ENCODE measurements at regions of chr18 and their contacts with region 1.

Region 1: GRCh38 chr18:58768293-58768974 is 96.2 kb upstream of the ZNF532 start:
- DNase-seq: peak; percentile 42 to 79
- ATAC-seq: peak; percentile 72 to 84 (median 78)
- H3K4me3 ChIP-seq: no peak overlapping the region
- H3K4me3 Mint-ChIP-seq: no peak overlapping the region
- H3K27ac ChIP-seq: no peak overlapping the region
- H3K27ac Mint-ChIP-seq: no peak overlapping the region
- H3K4me1 ChIP-seq: peaks cover 12% of the 10 kb centered on the region
- H3K4me1 Mint-ChIP-seq: peaks cover 0 to 5% of the 10 kb centered on the region in 2 donors
- H3K27me3 ChIP-seq: peaks cover 2% of the 10 kb centered on the region
- H3K27me3 Mint-ChIP-seq: peaks cover 32 to 37% of the 10 kb centered on the region in 2 donors
- CTCF ChIP-seq: peak; percentile 34

Region 2: DNA sequence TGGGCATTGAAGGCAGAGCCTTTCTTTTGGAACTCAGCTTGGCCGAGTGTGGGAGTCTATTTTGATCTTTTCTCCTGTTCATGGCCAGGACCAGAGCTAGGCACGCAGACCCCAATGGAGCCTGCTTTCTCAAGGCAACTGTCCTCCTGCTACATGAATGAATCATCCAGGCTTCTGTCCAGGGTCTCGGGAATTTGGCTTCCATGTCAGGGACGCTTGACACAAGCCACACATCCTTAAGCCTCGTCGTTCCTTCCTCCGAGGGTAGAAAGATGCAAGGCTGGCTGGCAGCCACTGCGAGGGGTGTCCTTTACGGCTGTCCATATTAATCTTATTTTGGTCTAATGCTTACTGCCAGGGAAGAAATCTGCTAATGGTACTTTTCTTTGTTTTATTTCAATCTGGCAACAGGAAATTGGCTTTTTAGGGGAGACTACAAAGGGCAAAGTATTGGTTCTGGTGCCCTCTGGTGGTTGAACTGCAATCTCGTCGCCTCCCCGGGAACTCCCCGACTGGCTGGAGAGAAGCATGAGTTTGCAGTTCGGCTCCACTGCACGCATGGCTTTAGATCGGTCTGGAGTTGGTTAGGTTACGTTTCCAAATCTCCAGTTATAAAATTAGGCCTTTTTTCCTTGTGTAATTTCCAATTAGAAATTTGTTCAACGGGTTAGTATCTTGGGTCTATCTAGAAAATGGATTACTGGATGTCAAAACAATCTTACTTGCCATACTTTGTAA is 274.7 kb before region 1 on chr18:
- intact Hi-C with region 1: loop called (anchors 1 kb)
- DNase-seq: peak; percentile 42 to 83
- ATAC-seq: peak; percentile 78 to 97 (median 94)
- H3K4me3 ChIP-seq: no peak overlapping the region
- H3K4me3 Mint-ChIP-seq: no peak overlapping the region
- H3K27ac ChIP-seq: no peak overlapping the region
- H3K27ac Mint-ChIP-seq: no peak overlapping the region
- H3K4me1 ChIP-seq: no peaks in the 10 kb centered on the region
- H3K4me1 Mint-ChIP-seq: peaks cover 6 to 7% of the 10 kb centered on the region in 2 donors
- H3K27me3 ChIP-seq: no peaks in the 10 kb centered on the region
- H3K27me3 Mint-ChIP-seq: peaks cover 36 to 40% of the 10 kb centered on the region in 2 donors
- CTCF ChIP-seq: peak; percentile 66

Region 3: DNA sequence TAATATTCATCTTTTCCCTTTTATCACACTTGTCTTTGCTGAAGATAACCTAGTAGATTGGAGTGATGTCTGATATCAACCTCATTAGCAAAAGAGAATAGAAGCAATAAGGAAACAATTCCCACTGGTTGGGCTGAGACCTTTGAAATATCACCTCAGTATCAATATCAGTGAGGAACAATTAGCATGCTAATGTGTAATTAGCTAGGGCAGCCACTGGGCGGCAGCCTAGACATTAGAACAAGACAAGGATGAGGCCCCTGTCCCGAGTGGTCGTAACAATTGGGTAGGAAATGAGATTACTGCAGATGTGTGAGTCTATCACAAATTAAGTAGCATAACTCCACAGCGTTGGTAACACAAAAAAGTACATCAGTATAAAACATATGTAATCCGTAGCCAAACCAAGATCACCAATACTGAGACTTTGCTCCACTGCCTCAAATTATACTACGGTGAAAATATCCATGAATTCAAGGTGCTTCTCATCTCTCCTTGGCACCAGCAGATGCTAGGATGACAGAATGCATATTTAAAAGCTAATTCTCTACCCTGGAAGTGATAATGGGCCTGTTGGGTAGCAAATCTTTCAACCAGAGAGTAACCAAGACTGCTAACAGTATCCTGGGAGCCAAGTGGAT is 238.6 kb before region 1 on chr18:
- intact Hi-C with region 1: loop called (anchors 1 kb)
- DNase-seq: peak; percentile 47 to 79
- ATAC-seq: peak; percentile 62 to 88 (median 83)
- H3K4me3 ChIP-seq: no peak overlapping the region
- H3K4me3 Mint-ChIP-seq: no peak overlapping the region
- H3K27ac ChIP-seq: no peak overlapping the region
- H3K27ac Mint-ChIP-seq: no peak overlapping the region
- H3K4me1 ChIP-seq: peaks cover 1% of the 10 kb centered on the region
- H3K4me1 Mint-ChIP-seq: peaks cover 0 to 6% of the 10 kb centered on the region in 2 donors
- H3K27me3 ChIP-seq: peaks cover 3% of the 10 kb centered on the region
- H3K27me3 Mint-ChIP-seq: peaks cover 17 to 18% of the 10 kb centered on the region in 2 donors
- CTCF ChIP-seq: peak; percentile 86

Region 4: GRCh38 chr18:58970943-58971790 is 202.7 kb after region 1 on chr18:
- intact Hi-C with region 1: no loop called
- DNase-seq: no peak
- ATAC-seq: peak in 1 of 3 donors; percentile 40
- H3K4me3 ChIP-seq: no peak overlapping the region
- H3K4me3 Mint-ChIP-seq: no peak overlapping the region
- H3K27ac ChIP-seq: peak overlapping the region; percentile 32
- H3K27ac Mint-ChIP-seq: no peak overlapping the region
- H3K4me1 ChIP-seq: no peaks in the 10 kb centered on the region
- H3K4me1 Mint-ChIP-seq: no peaks in the 10 kb centered on the region
- H3K27me3 ChIP-seq: no peaks in the 10 kb centered on the region
- H3K27me3 Mint-ChIP-seq: peaks cover 4 to 10% of the 10 kb centered on the region in 2 donors
- CTCF ChIP-seq: no peak

Region 5: DNA sequence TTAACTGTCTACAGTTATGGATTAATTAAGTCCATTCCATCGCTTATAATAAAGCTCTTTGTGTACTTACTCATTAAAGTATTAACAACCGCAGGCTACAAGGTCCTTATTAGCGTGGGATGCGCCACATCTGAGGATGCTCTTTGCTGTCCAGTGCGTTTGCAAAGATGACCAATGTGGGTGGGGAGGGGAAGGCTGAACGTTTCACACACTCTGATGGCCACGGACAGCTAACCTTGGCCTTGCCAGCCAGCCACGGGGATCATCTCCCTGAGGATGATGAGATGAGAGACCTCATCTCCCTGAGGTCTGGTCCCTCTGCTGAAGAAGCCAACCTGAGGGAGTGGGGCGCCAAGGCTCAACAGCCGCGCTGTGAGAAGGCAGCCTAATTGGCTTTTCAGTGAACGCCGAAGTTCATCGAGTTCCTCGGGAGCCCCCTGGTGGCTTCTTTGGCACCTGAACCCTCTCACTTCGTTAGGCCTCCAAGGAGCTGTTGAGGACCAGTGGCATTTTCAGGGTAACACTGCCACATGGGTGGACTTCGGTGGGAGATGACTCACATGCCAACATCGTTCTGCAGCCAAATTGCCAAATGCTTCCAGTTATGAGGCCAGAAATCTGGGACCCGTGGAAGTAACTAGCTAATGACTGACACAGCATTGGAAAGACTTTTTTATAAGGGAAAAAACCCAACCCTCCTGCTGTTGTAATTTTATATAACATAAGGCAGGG is 301.9 kb after region 1 on chr18:
- intact Hi-C with region 1: loop called (anchors 1 kb)
- DNase-seq: peak; percentile 50 to 81
- ATAC-seq: peak; percentile 65 to 88 (median 68)
- H3K4me3 ChIP-seq: no peak overlapping the region
- H3K4me3 Mint-ChIP-seq: no peak overlapping the region
- H3K27ac ChIP-seq: no peak overlapping the region
- H3K27ac Mint-ChIP-seq: no peak overlapping the region
- H3K4me1 ChIP-seq: no peaks in the 10 kb centered on the region
- H3K4me1 Mint-ChIP-seq: no peaks in the 10 kb centered on the region
- H3K27me3 ChIP-seq: no peaks in the 10 kb centered on the region
- H3K27me3 Mint-ChIP-seq: peaks cover 0 to 10% of the 10 kb centered on the region in 2 donors
- CTCF ChIP-seq: peak; percentile 79

Measured in natural killer cell (primary cell).